GM13976 (cell line): ENCODE measurements at regions of chr3 and their contacts with region 1.

Region 1: DNA sequence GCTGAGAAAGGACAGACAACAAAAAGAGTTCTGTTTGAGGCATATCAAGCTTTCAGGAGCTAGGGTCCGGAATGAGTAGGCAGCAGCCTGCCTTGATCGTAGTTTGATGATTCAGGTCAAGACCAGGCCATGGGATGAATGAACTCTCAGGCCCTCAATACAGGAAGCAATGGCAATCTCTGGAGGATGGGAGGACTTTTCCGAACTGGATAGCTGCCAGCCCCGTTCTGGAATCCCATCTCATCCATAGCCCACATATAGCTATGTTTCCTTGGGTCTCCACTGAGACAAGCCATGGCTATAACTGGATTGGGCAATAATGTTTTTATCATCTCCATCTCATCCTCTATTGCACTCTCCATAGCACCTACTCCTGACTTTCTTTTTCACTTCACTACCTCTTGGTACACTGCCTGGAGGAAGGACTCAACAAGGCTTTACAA is 12.8 kb downstream of the AHSG start:
- DNase-seq: no peak
- CTCF ChIP-seq: no peak

Region 2: DNA sequence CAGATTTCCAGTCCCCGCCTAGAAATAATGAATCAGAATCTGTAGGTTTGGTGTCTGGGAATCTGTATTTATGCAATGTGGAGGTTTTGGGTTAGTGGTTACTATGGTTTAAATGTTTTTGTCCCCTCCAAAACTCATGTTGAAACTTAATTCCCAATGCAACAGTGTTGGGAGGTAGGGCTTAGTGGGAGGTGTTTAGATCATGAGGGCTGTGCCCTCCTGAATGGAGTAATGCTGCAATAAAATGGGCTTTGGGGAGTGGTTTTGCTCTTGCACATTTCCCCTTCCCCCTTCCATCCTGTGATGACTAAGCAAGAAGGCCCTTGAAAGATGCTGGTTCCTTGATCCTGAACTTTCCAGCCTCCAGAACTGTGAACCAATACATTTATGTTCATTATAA is 189.8 kb after region 1 on chr3:
- in situ Hi-C with region 1: loop called (anchors 10 kb)
- DNase-seq: no peak
- CTCF ChIP-seq: no peak

Region 3: DNA sequence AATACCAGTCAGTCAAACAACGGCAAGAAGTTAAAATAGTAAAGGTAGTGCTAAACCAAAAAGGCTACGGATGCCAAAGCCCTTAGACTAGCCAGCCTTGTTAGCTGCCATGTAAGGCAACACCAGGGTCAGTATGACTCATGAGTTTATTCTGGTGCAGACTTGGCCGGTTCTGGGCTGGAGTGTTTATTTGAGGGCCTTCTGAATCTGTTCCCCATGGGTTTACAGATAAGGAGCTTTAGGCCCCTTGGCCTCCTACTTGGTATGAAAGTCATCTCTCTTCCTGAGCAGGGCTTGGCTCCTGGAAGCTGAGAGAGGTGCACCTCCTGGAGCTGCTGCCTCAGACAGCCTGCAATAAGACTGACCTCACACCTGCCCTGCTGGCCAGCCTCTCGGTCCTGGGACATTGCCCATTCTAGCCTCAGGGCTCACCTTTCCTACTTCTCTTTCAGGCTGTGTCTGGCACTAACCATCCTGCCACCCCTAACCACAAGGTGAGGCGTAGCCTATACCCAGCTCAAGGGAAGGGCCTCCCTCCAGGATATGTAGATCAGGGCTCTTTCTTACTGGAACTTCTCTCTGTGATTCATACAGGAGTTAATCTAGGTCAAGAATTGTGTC is 561.3 kb after region 1 on chr3:
- in situ Hi-C with region 1: no loop called
- DNase-seq: no peak
- CTCF ChIP-seq: no peak